ENCODE measurements at regions of chr2 and their contacts with region 1.

Region 1: GRCh38 chr2:96760036-96760985 is at the start of gene CNNM4:
- DNase-seq: peak; percentile 89 to 94 (median 94)
- H3K4me3 ChIP-seq: peak within 1 kb of the TSS; percentile 54 to 86 (median 79)
- H3K27ac ChIP-seq: peak within 1 kb of the TSS in 1 of 2 experiments; percentile 46
- H3K4me1 ChIP-seq: peaks cover 18 to 64% (median 58%) of the 10 kb centered on the region in 4 experiments
- H3K27me3 ChIP-seq: no peaks in the 10 kb centered on the region

Region 2: DNA sequence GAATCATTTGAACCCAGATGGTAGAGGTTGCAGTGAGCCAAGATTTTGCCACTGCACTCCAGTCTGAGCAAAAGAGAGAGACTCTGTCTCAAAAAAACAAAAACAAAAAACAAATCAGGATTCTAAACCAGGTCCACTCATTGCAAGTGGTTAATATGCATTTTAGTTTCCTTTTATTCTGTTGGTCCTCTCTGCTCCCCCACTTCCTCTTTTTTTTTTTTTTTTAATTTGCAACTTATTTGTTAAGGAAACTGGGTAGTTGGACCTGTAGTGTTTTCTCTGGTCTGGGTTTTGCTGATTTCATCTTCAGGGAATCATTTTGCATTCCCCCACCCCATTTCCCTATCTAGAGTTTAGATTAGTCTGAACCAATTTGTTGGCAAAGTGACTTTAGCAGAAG is 103.8 kb before region 1 on chr2:
- CTCF ChIA-PET with region 1: no interaction called
- POLR2A ChIA-PET with region 1: no interaction called
- DNase-seq: peak; percentile 40 to 77 (median 74)
- H3K4me3 ChIP-seq: no peak overlapping the region
- H3K27ac ChIP-seq: no peak overlapping the region
- H3K4me1 ChIP-seq: peaks cover 0 to 6% (median 1%) of the 10 kb centered on the region in 4 experiments
- H3K27me3 ChIP-seq: no peaks in the 10 kb centered on the region

Region 3: DNA sequence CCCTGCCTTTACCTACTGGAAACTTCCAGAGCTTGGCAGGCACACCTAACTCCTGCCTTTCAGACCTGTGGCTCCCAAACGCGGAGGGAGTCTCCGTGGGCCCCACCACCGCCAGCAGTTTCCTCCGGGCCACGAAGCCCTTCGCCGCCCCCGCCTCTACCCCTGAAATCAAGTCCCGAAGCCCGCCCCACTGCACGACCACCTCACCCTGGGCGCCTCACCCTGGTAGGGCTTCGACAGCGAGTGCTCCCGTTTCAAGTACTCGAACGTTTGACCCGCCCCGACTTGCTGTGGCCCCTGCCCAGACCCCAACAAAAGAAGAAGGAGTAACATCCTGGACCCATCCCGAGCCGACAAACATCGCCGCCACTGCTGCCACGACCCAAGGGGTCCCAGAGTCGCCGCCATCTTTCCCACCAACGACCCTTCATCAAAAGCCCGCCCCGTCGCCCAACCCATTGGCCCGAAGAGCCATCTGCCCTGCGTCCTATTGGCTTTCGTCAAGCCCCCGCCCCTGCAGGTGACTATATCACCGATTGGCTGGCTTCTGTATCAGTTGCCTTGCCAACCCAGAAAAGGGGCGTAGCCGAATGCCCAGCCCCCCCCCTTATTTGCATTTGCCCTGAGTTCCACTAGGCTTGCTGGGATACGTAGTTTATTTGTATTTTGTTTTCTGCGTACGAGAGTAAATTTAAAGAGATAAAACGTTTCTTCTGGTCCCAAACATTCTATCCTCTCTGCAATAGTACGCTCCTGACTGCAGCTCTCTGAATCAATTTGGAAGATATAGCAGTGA is 20.5 kb before region 1 on chr2 and contains the start of gene LMAN2L:
- CTCF ChIA-PET with region 1: interaction called, 12 read pairs
- POLR2A ChIA-PET with region 1: no interaction called
- DNase-seq: peak; percentile 96 to 99 (median 99)
- H3K4me3 ChIP-seq: peak within 1 kb of the TSS; percentile 81 to 97 (median 92)
- H3K27ac ChIP-seq: peak within 1 kb of the TSS; percentile 79 to 92
- H3K4me1 ChIP-seq: peaks cover 9 to 20% (median 14%) of the 10 kb centered on the region in 4 experiments
- H3K27me3 ChIP-seq: no peaks in the 10 kb centered on the region

Region 4: GRCh38 chr2:96773922-96774321 is 13.6 kb after region 1 on chr2:
- CTCF ChIA-PET with region 1: interaction called, 22 read pairs
- POLR2A ChIA-PET with region 1: no interaction called
- DNase-seq: peak; percentile 80 to 93 (median 91)
- H3K4me3 ChIP-seq: peak overlapping the region; percentile 40 to 86 (median 64)
- H3K27ac ChIP-seq: peak overlapping the region in 1 of 2 experiments; percentile 77
- H3K4me1 ChIP-seq: peaks cover 2 to 31% (median 21%) of the 10 kb centered on the region in 4 experiments
- H3K27me3 ChIP-seq: no peaks in the 10 kb centered on the region

Region 5: DNA sequence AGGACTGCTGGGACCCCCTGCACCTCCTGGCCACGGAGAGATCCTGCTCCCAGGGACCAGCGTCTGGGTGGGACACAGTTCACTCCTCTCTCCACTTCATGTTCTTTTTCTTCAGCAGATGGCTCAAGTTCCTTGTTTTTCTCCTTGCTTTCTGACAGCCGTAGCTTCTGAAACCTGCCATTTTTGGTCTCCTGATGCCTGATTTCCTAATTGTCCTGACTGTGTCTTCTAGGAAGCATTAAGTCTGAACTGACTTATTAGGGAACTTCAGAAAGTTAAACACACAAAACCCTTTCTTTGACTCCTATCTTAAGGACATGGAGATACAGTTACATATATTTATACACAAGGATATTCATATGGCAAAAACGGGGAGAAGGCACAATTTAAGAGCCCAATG is 23.1 kb after region 1 on chr2:
- CTCF ChIA-PET with region 1: interaction called, 16 read pairs
- POLR2A ChIA-PET with region 1: no interaction called
- DNase-seq: no peak
- H3K4me3 ChIP-seq: no peak overlapping the region
- H3K27ac ChIP-seq: no peak overlapping the region
- H3K4me1 ChIP-seq: no peaks in the 10 kb centered on the region
- H3K27me3 ChIP-seq: no peaks in the 10 kb centered on the region

Region 6: GRCh38 chr2:96801005-96801785 is 40.9 kb after region 1 on chr2:
- CTCF ChIA-PET with region 1: interaction called, 34 read pairs
- POLR2A ChIA-PET with region 1: interaction called, 5 read pairs
- DNase-seq: peak; percentile 70 to 80 (median 78)
- H3K4me3 ChIP-seq: peak overlapping the region in 3 of 7 experiments; percentile 25 to 53 (median 45)
- H3K27ac ChIP-seq: no peak overlapping the region
- H3K4me1 ChIP-seq: peaks cover 0 to 17% (median 14%) of the 10 kb centered on the region in 4 experiments
- H3K27me3 ChIP-seq: no peaks in the 10 kb centered on the region